Right ventricle myocardium inferior (tissue), 1 donor: ENCODE measurements at regions of chr15 and their contacts with region 1.

Region 1: GRCh38 chr15:55334997-55335396 is 16.0 kb downstream of the PIGB start:
- DNase-seq: no peak
- ATAC-seq: no peak

Region 2: GRCh38 chr15:55394694-55395093 is 59.7 kb after region 1 on chr15:
- intact Hi-C with region 1: loop called (anchors 10 kb)
- DNase-seq: no peak
- ATAC-seq: no peak

Region 3: DNA sequence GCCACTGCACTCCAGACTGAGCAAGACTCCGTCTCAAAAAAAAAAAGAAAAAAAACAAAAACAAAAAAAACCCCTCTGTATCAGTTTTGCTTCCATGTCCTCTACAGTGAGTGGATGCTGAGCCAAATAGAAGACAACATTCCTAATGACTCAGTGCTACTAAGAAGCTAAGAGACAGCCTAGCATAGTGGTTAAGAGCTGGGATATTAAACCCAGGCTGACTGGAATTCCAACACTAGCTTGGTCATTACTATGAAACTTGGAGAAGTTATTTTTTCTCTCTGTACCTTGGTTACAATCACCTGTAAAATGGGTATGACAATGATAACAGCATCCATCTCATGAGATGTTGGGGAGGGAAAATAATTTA is 314.0 kb after region 1 on chr15:
- intact Hi-C with region 1: no loop called
- DNase-seq: no peak
- ATAC-seq: no peak